ENCODE measurements at regions of chr10 and their contacts with region 1.

Region 1: DNA sequence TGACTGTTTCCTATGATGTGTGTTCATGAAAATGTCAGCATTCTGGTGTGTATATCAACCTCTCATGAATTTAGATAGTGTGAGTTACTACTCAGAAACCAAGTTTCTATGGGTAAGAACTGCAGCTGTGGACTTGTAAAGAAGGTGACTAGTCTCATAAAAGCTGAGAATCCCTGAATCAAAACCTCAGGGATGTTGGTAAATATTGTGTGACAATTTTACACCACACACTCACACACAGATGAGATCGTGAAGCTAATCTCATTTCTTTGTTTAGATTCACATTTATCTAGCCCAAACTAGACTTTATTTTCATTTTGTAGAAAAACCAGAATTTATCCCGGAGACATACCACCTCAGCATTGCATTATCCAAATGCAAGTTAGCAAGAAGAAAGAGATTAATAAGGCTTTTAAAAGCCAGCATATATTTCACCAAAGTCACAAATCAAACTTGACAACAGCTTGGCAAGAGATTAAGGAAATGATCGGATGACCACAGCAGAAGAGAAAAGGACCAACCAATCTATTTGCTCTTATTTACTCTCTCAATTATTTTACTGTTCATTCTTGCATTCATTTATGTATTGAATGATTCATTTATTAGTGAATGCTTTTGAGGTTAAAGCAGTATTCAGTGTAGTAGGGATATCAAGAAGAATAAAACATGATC is 92.9 kb downstream of the PLXDC2 start:
- DNase-seq: no peak
- H3K4me3 ChIP-seq: no peak overlapping the region
- CTCF ChIP-seq: no peak
- POLR2A ChIP-seq: no peak

Region 2: GRCh38 chr10:18759575-18759974 is 1149.6 kb before region 1 on chr10:
- intact Hi-C with region 1: loop called (anchors 5 kb)
- DNase-seq: no peak
- H3K4me3 ChIP-seq: no peak overlapping the region
- CTCF ChIP-seq: no peak
- POLR2A ChIP-seq: no peak